A673 (cell line): ENCODE measurements at regions of chr18 and their contacts with region 1.

Region 1: GRCh38 chr18:21656402-21656801 is 44.3 kb downstream of the SNRPD1 start:
- DNase-seq: no peak
- H3K4me3 ChIP-seq: no peak overlapping the region
- H3K27ac ChIP-seq: no peak overlapping the region
- H3K4me1 ChIP-seq: no peaks in the 10 kb centered on the region
- H3K27me3 ChIP-seq: no peaks in the 10 kb centered on the region
- CTCF ChIP-seq: no peak

Region 2: DNA sequence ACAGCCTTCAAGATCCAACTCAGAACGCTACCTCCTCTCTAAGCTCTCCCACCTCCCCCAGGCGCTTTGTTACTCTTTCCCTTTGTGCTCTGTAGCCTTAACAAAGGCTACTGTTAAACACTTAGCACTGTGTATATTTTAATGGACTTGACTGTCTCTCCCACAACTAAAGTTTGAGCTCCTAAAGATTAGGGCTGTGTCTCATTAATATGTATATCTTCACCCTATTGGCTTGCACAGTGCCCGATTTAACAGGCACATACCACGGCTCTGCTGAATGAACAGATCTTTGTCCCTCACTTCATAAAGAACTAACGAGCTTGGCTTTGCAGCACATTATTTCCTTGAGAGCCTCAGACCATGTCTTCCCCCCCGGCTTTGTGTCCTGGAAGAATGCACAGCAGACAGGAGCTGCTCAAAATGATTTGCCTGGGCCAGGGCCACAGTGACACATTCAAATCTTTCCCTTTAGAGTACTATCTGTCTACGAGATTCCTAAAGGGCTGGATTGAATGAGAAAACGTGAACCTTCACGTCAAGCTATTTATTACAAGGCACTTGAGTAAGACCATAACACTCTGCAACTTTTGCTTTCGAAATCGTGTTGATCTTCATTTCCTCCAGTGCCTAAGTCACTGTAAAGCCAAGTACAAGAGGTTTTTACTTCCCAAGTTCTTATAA is 26.1 kb after region 1 on chr18:
- CTCF ChIA-PET with region 1: no interaction called
- POLR2A ChIA-PET with region 1: no interaction called
- intact Hi-C with region 1: no loop called
- DNase-seq: peak; percentile 44
- H3K4me3 ChIP-seq: peak overlapping the region; percentile 26
- H3K27ac ChIP-seq: peak overlapping the region; percentile 76
- H3K4me1 ChIP-seq: peaks cover 20% of the 10 kb centered on the region
- H3K27me3 ChIP-seq: no peaks in the 10 kb centered on the region
- CTCF ChIP-seq: no peak

Region 3: DNA sequence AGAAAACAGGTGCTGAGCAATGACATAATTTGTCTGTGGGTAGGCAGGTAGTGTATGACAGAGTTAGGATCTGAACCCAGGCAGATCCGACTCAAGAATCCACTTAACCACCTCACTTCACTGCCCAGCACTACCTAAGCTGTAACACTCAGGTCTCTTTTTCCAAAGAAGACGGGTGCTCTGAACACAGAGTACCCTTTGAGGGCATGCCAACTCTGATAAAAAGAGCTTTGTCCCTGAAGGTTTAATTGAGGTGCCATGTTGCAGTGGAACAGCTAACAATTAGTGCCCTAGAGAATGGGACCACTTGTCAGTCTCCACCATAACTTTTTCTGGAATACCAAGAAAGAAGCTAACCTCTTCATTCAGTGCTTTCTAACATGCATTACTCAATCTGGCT is 36.9 kb after region 1 on chr18:
- CTCF ChIA-PET with region 1: no interaction called
- POLR2A ChIA-PET with region 1: no interaction called
- intact Hi-C with region 1: loop called (anchors 5 kb)
- DNase-seq: no peak
- H3K4me3 ChIP-seq: no peak overlapping the region
- H3K27ac ChIP-seq: no peak overlapping the region
- H3K4me1 ChIP-seq: no peaks in the 10 kb centered on the region
- H3K27me3 ChIP-seq: no peaks in the 10 kb centered on the region
- CTCF ChIP-seq: no peak

Region 4: GRCh38 chr18:21833604-21834298 is 177.3 kb after region 1 on chr18:
- CTCF ChIA-PET with region 1: no interaction called
- POLR2A ChIA-PET with region 1: no interaction called
- intact Hi-C with region 1: no loop called
- DNase-seq: no peak
- H3K4me3 ChIP-seq: no peak overlapping the region
- H3K27ac ChIP-seq: no peak overlapping the region
- H3K4me1 ChIP-seq: no peaks in the 10 kb centered on the region
- H3K27me3 ChIP-seq: no peaks in the 10 kb centered on the region
- CTCF ChIP-seq: no peak